HCT116 (cell line): ENCODE measurements at regions of chr2 and their contacts with region 1.

Region 1: DNA sequence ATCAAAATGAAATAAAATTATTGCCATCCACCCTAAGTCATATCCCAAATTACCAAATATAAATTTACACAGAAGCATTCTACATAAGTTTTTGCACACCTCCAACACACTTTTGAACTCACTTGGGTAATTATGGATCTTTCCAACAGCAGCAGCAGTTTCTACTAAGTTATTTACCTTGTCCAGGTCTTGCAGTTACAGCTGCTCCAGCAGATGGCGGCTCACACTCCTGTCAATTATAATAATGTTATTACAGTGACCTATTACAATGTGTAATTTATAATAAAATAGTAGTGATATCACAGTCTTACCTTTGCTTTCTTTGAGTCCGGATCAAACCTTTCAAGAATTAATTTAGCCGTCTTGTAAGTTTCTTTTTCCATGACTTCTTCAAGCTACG is 37.9 kb downstream of the LNPK start:
- DNase-seq: peak; percentile 8
- ATAC-seq: peak; percentile 58; the same call in 1 of the 2 replicates
- H3K4me3 ChIP-seq: no peak overlapping the region
- H3K27ac ChIP-seq: no peak overlapping the region
- H3K4me1 ChIP-seq: no peaks in the 10 kb centered on the region
- H3K27me3 ChIP-seq: no peaks in the 10 kb centered on the region
- CTCF ChIP-seq: peak; percentile 19 to 41 (median 33); a peak in 4 of 6 replicates
- POLR2A ChIP-seq: no peak
- RAD21 ChIP-seq: peak; percentile 26

Region 2: DNA sequence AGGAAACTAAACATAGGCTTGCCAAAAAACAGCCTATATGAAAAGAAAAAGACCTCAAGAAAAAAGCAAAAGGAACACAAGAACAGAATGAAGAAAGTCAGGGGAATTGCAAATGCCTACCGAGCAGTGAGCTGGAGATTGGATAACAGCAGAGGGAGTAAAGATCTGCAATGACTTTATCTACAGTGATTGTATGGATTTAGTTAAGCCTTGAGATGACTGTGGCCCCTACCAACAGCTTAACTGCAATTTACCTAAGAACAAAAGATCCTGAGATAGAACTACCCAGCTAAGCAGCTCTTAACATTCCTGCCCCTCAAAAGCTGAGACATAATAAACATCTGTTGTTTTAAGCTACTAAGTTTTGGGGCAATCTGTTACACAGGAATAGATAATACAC is 17.4 kb after region 1 on chr2:
- CTCF ChIA-PET with region 1: interaction called, 4 read pairs
- POLR2A ChIA-PET with region 1: no interaction called
- RAD21 ChIA-PET with region 1: no interaction called
- intact Hi-C with region 1: loop called (anchors 1 kb)
- DNase-seq: no peak
- ATAC-seq: no peak
- H3K4me3 ChIP-seq: no peak overlapping the region
- H3K27ac ChIP-seq: no peak overlapping the region
- H3K4me1 ChIP-seq: no peaks in the 10 kb centered on the region
- H3K27me3 ChIP-seq: no peaks in the 10 kb centered on the region
- CTCF ChIP-seq: no peak
- POLR2A ChIP-seq: no peak
- RAD21 ChIP-seq: no peak

Region 3: GRCh38 chr2:176096986-176097819 is 133.0 kb after region 1 on chr2:
- CTCF ChIA-PET with region 1: no interaction called
- POLR2A ChIA-PET with region 1: no interaction called
- RAD21 ChIA-PET with region 1: no interaction called
- intact Hi-C with region 1: no loop called
- DNase-seq: peak; percentile 66
- ATAC-seq: peak; percentile 97
- H3K4me3 ChIP-seq: peak overlapping the region; percentile 46 to 64
- H3K27ac ChIP-seq: no peak overlapping the region; the same call in 1 of the 2 replicates
- H3K4me1 ChIP-seq: peaks cover 5 to 18% of the 10 kb centered on the region in 2 experiments; a peak in 3 of 4 replicates
- H3K27me3 ChIP-seq: no peaks in the 10 kb centered on the region
- CTCF ChIP-seq: peak; percentile 79 to 87 (median 84)
- POLR2A ChIP-seq: no peak
- RAD21 ChIP-seq: peak; percentile 90